Calu3 (cell line): ENCODE measurements at regions of chr5 and their contacts with region 1.

Region 1: GRCh38 chr5:149114403-149115312 is 26.6 kb upstream of the ABLIM3 start:
- DNase-seq: peak; percentile 87
- H3K4me3 Mint-ChIP-seq: no peak overlapping the region
- H3K27ac Mint-ChIP-seq: peak overlapping the region; percentile 64
- H3K4me1 Mint-ChIP-seq: peaks cover 77% of the 10 kb centered on the region
- H3K27me3 Mint-ChIP-seq: no peaks in the 10 kb centered on the region
- CTCF ChIP-seq: peak; percentile 81

Region 2: DNA sequence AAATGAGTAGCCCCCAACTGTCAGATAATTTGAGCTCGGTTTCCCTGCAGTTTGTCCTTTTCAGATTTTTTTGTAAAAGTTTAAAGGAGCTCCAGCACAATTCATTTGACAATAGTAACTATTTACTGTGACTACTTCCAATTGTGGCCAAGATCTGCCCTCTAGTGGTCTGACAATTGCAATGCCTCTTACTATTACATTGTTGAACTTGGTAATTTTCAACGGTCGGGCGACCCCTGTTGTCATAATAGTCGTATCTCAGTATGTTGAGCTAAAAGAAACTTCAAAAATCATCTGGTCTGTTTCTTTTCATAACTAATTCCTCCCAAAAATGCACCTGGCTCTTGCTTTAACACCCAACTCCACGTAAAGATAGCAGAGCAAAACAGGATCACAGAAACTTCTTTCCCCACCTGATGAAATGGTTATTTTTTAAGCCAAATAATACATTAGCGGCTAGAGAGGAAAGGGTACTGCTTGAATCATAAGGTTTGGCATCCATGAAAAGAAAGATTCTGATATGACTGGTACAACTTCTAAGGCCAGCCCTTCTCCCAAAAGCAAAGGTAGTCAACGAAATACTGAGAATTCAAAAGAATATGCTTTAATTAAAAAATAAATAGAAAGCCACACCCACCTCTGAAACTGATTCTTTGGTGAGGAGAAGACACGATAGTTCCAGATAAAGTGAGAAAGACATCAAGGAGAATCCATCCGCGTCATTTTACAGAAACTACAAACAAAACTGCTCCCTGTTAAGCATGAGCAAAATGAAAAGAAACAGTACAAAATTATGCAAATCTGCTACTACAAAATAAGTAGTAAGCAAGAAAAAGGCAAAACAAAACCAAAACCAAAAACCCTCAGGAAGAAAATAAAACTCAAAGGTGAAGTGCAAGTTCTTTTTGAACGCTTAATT is 383.5 kb before region 1 on chr5:
- CTCF ChIA-PET with region 1: interaction called, 31 read pairs
- intact Hi-C with region 1: loop called (anchors 1 kb)
- DNase-seq: peak; percentile 82
- H3K4me3 Mint-ChIP-seq: peak overlapping the region; percentile 47
- H3K27ac Mint-ChIP-seq: peak overlapping the region; percentile 4
- H3K4me1 Mint-ChIP-seq: peaks cover 46% of the 10 kb centered on the region
- H3K27me3 Mint-ChIP-seq: no peaks in the 10 kb centered on the region
- CTCF ChIP-seq: peak; percentile 91

Region 3: GRCh38 chr5:148826053-148826738 is 288.5 kb before region 1 on chr5 and contains the start of gene ADRB2:
- CTCF ChIA-PET with region 1: interaction called, 18 read pairs
- intact Hi-C with region 1: loop called (anchors 5 kb)
- DNase-seq: peak; percentile 99
- H3K4me3 Mint-ChIP-seq: peak within 1 kb of the TSS; percentile 88
- H3K27ac Mint-ChIP-seq: peak within 1 kb of the TSS; percentile 79
- H3K4me1 Mint-ChIP-seq: peaks cover 16% of the 10 kb centered on the region
- H3K27me3 Mint-ChIP-seq: no peaks in the 10 kb centered on the region
- CTCF ChIP-seq: no peak
- total RNA-seq, gene ADRB2: 16.6 and 16.9 TPM in 2 replicates

Region 4: GRCh38 chr5:148998174-148998797 is 116.4 kb before region 1 on chr5:
- CTCF ChIA-PET with region 1: interaction called, 22 read pairs
- intact Hi-C with region 1: loop called (anchors 2 kb)
- DNase-seq: peak; percentile 76
- H3K4me3 Mint-ChIP-seq: no peak overlapping the region
- H3K27ac Mint-ChIP-seq: peak overlapping the region; percentile 25
- H3K4me1 Mint-ChIP-seq: peaks cover 76% of the 10 kb centered on the region
- H3K27me3 Mint-ChIP-seq: no peaks in the 10 kb centered on the region
- CTCF ChIP-seq: peak; percentile 56

Region 5: DNA sequence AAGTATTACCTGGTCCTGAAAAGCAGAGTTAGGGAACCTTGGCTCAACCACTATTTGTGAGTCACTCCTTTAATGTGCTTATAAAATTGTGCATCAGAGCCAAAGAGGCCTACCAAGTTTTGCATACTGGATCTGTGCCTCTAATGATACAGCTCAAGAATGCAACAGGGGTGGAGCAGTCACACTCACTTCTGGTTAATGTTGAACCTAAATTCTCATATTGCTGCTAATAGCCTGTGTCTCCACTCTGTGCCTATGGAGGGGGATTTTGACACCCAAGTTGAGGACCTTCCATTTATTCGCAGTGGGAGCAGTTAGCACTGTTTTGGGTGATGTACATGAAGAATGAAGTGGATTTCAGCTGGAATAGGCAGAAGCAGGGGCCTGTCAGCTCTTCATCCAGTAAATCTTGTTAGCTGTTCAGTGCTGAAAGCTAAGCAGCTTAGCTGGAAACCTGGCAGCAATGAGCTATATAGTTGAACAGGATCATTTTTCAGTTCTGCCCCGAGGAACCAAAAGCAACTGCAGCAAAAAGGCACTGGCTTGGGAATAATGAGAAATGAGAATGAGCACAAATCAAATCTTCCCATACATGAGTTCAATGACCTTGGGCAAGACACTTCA is 61.5 kb before region 1 on chr5:
- CTCF ChIA-PET with region 1: interaction called, 15 read pairs
- intact Hi-C with region 1: no loop called
- DNase-seq: no peak
- H3K4me3 Mint-ChIP-seq: no peak overlapping the region
- H3K27ac Mint-ChIP-seq: peak overlapping the region; percentile 21
- H3K4me1 Mint-ChIP-seq: peaks cover 30% of the 10 kb centered on the region
- H3K27me3 Mint-ChIP-seq: no peaks in the 10 kb centered on the region
- CTCF ChIP-seq: no peak

Region 6: GRCh38 chr5:149367249-149367971 is 252.8 kb after region 1 on chr5:
- CTCF ChIA-PET with region 1: no interaction called
- intact Hi-C with region 1: no loop called
- DNase-seq: peak; percentile 89
- H3K4me3 Mint-ChIP-seq: no peak overlapping the region
- H3K27ac Mint-ChIP-seq: no peak overlapping the region
- H3K4me1 Mint-ChIP-seq: peaks cover 8% of the 10 kb centered on the region
- H3K27me3 Mint-ChIP-seq: no peaks in the 10 kb centered on the region
- CTCF ChIP-seq: peak; percentile 90